ENCODE measurements at regions of chr1 and their contacts with region 1.

Region 1: GRCh38 chr1:223091896-223092295 is 51.2 kb downstream of the TLR5 start:
- DNase-seq: no peak
- H3K4me3 ChIP-seq: no peak overlapping the region
- H3K27ac ChIP-seq: no peak overlapping the region
- H3K4me1 ChIP-seq: 0 out of 2 replicates have a peak, but pooled peaks cover 3% of the 10 kb centered on the region
- H3K27me3 ChIP-seq: peaks cover 27% of the 10 kb centered on the region; the same call in 1 of the 2 replicates

Region 2: GRCh38 chr1:222792744-222793143 is 299.2 kb before region 1 on chr1:
- in situ Hi-C with region 1: loop called (anchors 5 kb)
- DNase-seq: peak; percentile 49
- H3K4me3 ChIP-seq: no peak overlapping the region
- H3K27ac ChIP-seq: no peak overlapping the region
- H3K4me1 ChIP-seq: no peaks in the 10 kb centered on the region
- H3K27me3 ChIP-seq: 0 out of 2 replicates have a peak, but pooled peaks cover 5% of the 10 kb centered on the region

Measured in GM23248 (cell line).